ENCODE measurements at regions of chr14 and their contacts with region 1.

Region 1: GRCh38 chr14:49867831-49868723 is 15.5 kb upstream of the NEMF start:
- DNase-seq: peak; percentile 56
- H3K4me3 ChIP-seq: peak overlapping the region; percentile 59
- CTCF ChIP-seq: no peak

Region 2: GRCh38 chr14:49908432-49908781 is 40.3 kb after region 1 on chr14:
- in situ Hi-C with region 1: no loop called
- DNase-seq: no peak
- H3K4me3 ChIP-seq: no peak overlapping the region
- CTCF ChIP-seq: no peak

Region 3: DNA sequence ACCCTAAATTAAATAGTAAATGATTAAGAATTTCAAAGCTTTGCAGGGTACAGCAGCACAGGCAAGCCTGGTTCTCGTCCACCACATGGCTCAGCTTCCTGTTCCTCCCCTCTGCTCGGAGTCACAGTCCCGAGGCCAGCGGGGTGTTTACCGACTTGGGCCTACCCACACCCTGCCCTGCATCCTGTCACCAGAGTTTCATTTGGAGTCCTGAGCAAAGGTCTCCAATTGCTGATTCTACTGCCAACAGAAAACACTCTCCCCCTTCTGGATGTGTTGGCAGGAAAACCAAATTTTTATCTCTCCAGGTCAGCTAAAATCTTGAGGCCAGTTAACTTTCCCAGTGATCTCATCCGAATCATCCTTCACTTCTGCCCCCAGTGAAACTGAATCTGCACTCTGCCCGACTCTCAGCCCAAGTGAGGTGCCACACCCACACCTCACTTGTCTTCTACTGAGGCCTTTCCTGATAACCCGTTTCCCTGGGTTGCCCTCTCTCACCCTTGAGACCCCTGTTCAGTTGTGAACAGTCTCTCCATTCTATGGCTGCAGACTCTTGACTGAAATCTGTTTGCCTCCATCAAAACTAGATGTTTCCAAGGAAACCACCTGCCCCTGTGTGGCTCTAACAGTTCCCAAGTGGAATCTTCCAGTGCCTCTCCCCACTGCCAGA is 177.1 kb after region 1 on chr14:
- in situ Hi-C with region 1: no loop called
- DNase-seq: no peak
- H3K4me3 ChIP-seq: no peak overlapping the region
- CTCF ChIP-seq: no peak

Region 4: GRCh38 chr14:50123062-50123461 is 255.0 kb after region 1 on chr14:
- in situ Hi-C with region 1: loop called (anchors 10 kb)
- DNase-seq: no peak
- H3K4me3 ChIP-seq: no peak overlapping the region
- CTCF ChIP-seq: no peak

Measured in astrocyte of the cerebellum (primary cell).